Mucosa of descending colon (tissue), 3 donors: ENCODE measurements at regions of chrX and their contacts with region 1.

Region 1: GRCh38 chrX:17242470-17242869 is 132.5 kb upstream of the NHS start:
- DNase-seq: peak in 1 of 3 donors; percentile 72
- ATAC-seq: peak; percentile 55
- H3K4me3 ChIP-seq: no peak overlapping the region
- H3K4me1 ChIP-seq: no peaks in the 10 kb centered on the region
- CTCF ChIP-seq: peak; percentile 27

Region 2: DNA sequence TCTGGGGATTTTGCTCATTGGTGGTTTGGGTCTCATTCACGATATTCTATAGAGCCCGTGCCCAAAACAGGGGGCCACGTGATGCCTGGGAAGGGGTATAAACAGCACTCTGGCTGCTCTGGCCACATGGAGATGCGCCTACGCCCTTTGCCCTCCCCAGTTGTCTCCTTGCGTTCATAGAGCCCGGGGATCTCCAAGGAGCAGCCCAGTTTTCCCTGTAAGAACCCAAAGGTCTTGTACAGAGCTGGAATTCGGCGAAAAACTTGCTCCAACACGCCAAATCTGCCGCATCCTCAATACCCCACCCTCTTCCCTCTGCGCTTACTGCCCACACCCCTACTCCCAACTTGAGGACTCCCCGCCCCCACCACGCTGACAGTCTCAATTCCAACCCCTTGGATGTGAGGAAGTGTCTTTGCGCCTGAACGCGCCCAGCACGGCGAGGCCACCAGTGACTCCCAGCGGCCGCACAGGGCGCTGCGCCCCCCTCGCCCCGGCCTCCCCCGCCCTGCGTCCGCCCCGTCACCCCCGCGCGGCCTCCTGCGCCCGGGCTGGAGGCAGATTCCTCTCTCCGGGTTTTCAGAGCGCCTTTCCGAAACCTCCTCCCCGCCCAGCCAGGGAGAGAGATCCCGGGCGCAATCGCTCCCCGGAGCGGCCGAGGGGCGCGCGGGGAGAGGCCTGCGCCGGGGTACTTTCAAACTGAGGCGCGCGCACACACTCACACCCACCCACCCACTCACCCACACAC is 132.3 kb after region 1 on chrX and contains the start of gene NHS:
- intact Hi-C with region 1: loop called in 1 of 2 experiments (anchors 10 kb)
- DNase-seq: peak; percentile 66 to 80 (median 77)
- ATAC-seq: peak; percentile 82
- H3K4me3 ChIP-seq: peak within 1 kb of the TSS; percentile 3
- H3K4me1 ChIP-seq: no peaks in the 10 kb centered on the region
- CTCF ChIP-seq: peak; percentile 21
- total RNA-seq, gene NHS: 1.8 to 11.7 (median 2.1) TPM

Region 3: DNA sequence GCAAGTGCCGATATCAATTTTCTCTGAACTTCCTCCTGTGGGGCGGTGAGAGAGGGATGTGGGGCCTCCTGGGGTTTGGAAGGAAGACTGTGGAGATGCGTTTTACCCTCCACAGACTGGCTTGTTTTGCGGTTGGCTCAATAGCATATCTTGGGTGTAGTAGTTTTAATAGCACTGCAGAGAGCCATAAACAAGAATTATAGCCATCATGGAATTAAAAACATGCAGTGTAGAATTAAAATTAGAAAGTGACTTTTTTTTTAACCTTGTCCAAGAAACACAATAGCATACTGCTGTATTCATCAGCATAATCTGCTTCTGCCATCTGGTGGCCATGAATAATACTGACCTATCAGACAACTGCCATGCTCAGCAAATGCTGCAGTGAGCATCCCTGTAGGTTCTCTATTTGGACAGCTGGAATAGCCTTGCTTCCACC is 447.5 kb after region 1 on chrX:
- intact Hi-C with region 1: loop called (anchors 10 kb)
- DNase-seq: peak in 1 of 3 donors; percentile 80
- ATAC-seq: peak; percentile 91
- H3K4me3 ChIP-seq: no peak overlapping the region
- H3K4me1 ChIP-seq: no peaks in the 10 kb centered on the region
- CTCF ChIP-seq: no peak